ENCODE measurements at regions of chr11 and their contacts with region 1.

Region 1: GRCh38 chr11:10307442-10308207 is 2.8 kb downstream of the ADM start:
- DNase-seq: peak; percentile 71
- H3K4me3 Mint-ChIP-seq: peak overlapping the region; percentile 77
- H3K27ac Mint-ChIP-seq: peak overlapping the region; percentile 83
- H3K4me1 Mint-ChIP-seq: peaks cover 68% of the 10 kb centered on the region
- H3K27me3 Mint-ChIP-seq: peaks cover 52% of the 10 kb centered on the region

Region 2: GRCh38 chr11:8911029-8911826 is 1396.4 kb before region 1 on chr11 and contains the start of gene AKIP1:
- intact Hi-C with region 1: loop called (anchors 10 kb)
- DNase-seq: peak; percentile 77
- H3K4me3 Mint-ChIP-seq: peak within 1 kb of the TSS; percentile 97
- H3K27ac Mint-ChIP-seq: peak within 1 kb of the TSS; percentile 87
- H3K4me1 Mint-ChIP-seq: peaks cover 45% of the 10 kb centered on the region
- H3K27me3 Mint-ChIP-seq: peaks cover 12% of the 10 kb centered on the region
- total RNA-seq, gene AKIP1: 33.4 and 36.9 TPM in 2 replicates

Region 3: GRCh38 chr11:9534791-9535781 is 772.5 kb before region 1 on chr11:
- intact Hi-C with region 1: loop called (anchors 10 kb)
- DNase-seq: peak; percentile 59
- H3K4me3 Mint-ChIP-seq: no peak overlapping the region
- H3K27ac Mint-ChIP-seq: no peak overlapping the region
- H3K4me1 Mint-ChIP-seq: no peaks in the 10 kb centered on the region
- H3K27me3 Mint-ChIP-seq: no peaks in the 10 kb centered on the region

Region 4: GRCh38 chr11:9840460-9841004 is 467.1 kb before region 1 on chr11:
- intact Hi-C with region 1: loop called (anchors 5 kb)
- DNase-seq: peak; percentile 5
- H3K4me3 Mint-ChIP-seq: peak overlapping the region; percentile 2
- H3K27ac Mint-ChIP-seq: peak overlapping the region; percentile 19
- H3K4me1 Mint-ChIP-seq: peaks cover 46% of the 10 kb centered on the region
- H3K27me3 Mint-ChIP-seq: no peaks in the 10 kb centered on the region

Region 5: DNA sequence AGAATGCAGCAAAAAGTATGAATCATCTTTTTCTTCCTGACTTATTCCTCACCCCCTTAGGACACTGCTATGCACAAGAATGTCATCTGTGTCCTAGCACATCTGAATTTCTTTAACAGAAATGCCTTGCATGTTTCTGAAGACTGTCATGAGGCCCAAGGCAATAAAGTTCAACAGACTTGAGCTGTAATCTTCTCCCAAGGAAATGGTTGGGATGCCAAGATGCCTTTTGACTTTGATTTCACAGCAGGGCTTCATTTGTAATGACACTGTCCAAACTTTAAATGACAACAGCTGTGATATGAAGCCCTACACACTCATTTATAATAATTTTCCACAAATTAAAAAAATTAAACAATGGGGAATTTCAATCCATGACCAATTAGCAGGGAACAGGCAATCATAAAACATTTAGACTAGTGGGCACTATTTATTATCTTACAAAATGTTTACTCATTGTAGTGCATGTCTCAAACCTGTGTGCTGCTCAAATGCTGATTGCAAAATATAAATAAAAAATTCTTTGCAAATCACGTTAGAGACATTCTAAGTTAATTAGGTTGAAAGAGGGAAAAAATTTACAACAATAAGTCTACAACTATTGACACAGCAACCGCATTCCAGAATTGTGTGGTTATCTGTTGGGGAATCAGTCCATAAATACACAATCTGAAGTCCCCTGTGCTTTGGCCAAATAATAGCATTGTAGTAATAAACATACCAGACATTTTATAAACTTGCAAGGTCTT is 401.4 kb before region 1 on chr11:
- intact Hi-C with region 1: no loop called
- DNase-seq: no peak
- H3K4me3 Mint-ChIP-seq: no peak overlapping the region
- H3K27ac Mint-ChIP-seq: no peak overlapping the region
- H3K4me1 Mint-ChIP-seq: no peaks in the 10 kb centered on the region
- H3K27me3 Mint-ChIP-seq: peaks cover 2% of the 10 kb centered on the region

Region 6: GRCh38 chr11:10208131-10208575 is 99.5 kb before region 1 on chr11:
- intact Hi-C with region 1: loop called (anchors 1 kb)
- DNase-seq: no peak
- H3K4me3 Mint-ChIP-seq: no peak overlapping the region
- H3K27ac Mint-ChIP-seq: no peak overlapping the region
- H3K4me1 Mint-ChIP-seq: no peaks in the 10 kb centered on the region
- H3K27me3 Mint-ChIP-seq: peaks cover 11% of the 10 kb centered on the region

Region 7: GRCh38 chr11:10735481-10736475 is 428.2 kb after region 1 on chr11:
- intact Hi-C with region 1: loop called (anchors 1 kb)
- DNase-seq: peak; percentile 78
- H3K4me3 Mint-ChIP-seq: peak overlapping the region; percentile 37
- H3K27ac Mint-ChIP-seq: no peak overlapping the region
- H3K4me1 Mint-ChIP-seq: peaks cover 10% of the 10 kb centered on the region
- H3K27me3 Mint-ChIP-seq: peaks cover 10% of the 10 kb centered on the region